ENCODE measurements at regions of chr12 and their contacts with region 1.

Region 1: GRCh38 chr12:5442251-5443006 is 10.5 kb downstream of the NTF3 start:
- DNase-seq: no peak
- H3K4me3 ChIP-seq: no peak overlapping the region
- H3K27ac ChIP-seq: no peak overlapping the region
- H3K4me1 ChIP-seq: no peaks in the 10 kb centered on the region
- H3K27me3 ChIP-seq: no peaks in the 10 kb centered on the region
- CTCF ChIP-seq: peak; percentile 55

Region 2: GRCh38 chr12:5022465-5023061 is 419.9 kb before region 1 on chr12:
- intact Hi-C with region 1: loop called (anchors 5 kb)
- DNase-seq: peak; percentile 22
- H3K4me3 ChIP-seq: no peak overlapping the region
- H3K27ac ChIP-seq: no peak overlapping the region
- H3K4me1 ChIP-seq: no peaks in the 10 kb centered on the region
- H3K27me3 ChIP-seq: no peaks in the 10 kb centered on the region
- CTCF ChIP-seq: peak; percentile 84

Region 3: GRCh38 chr12:5171701-5172100 is 270.7 kb before region 1 on chr12:
- intact Hi-C with region 1: loop called (anchors 2 kb)
- DNase-seq: peak; percentile 50
- H3K4me3 ChIP-seq: no peak overlapping the region
- H3K27ac ChIP-seq: no peak overlapping the region
- H3K4me1 ChIP-seq: no peaks in the 10 kb centered on the region
- H3K27me3 ChIP-seq: no peaks in the 10 kb centered on the region
- CTCF ChIP-seq: peak; percentile 25

Region 4: GRCh38 chr12:5200278-5201087 is 241.9 kb before region 1 on chr12:
- intact Hi-C with region 1: loop called (anchors 2 kb)
- DNase-seq: peak; percentile 39
- H3K4me3 ChIP-seq: no peak overlapping the region
- H3K27ac ChIP-seq: no peak overlapping the region
- H3K4me1 ChIP-seq: no peaks in the 10 kb centered on the region
- H3K27me3 ChIP-seq: no peaks in the 10 kb centered on the region
- CTCF ChIP-seq: peak; percentile 47

Region 5: GRCh38 chr12:5556039-5556614 is 113.7 kb after region 1 on chr12:
- intact Hi-C with region 1: no loop called
- DNase-seq: peak; percentile 34
- H3K4me3 ChIP-seq: no peak overlapping the region
- H3K27ac ChIP-seq: no peak overlapping the region
- H3K4me1 ChIP-seq: no peaks in the 10 kb centered on the region
- H3K27me3 ChIP-seq: no peaks in the 10 kb centered on the region
- CTCF ChIP-seq: no peak